ENCODE measurements at regions of chr11 and their contacts with region 1.

Region 1: GRCh38 chr11:765025-765801 is 12.1 kb downstream of the GATD1 start:
- DNase-seq: peak; percentile 55
- ATAC-seq: peak; percentile 91
- H3K4me3 Mint-ChIP-seq: no peak overlapping the region
- H3K27ac Mint-ChIP-seq: no peak overlapping the region
- H3K4me1 Mint-ChIP-seq: peaks cover 3% of the 10 kb centered on the region
- H3K27me3 Mint-ChIP-seq: no peaks in the 10 kb centered on the region
- CTCF ChIP-seq: no peak

Region 2: DNA sequence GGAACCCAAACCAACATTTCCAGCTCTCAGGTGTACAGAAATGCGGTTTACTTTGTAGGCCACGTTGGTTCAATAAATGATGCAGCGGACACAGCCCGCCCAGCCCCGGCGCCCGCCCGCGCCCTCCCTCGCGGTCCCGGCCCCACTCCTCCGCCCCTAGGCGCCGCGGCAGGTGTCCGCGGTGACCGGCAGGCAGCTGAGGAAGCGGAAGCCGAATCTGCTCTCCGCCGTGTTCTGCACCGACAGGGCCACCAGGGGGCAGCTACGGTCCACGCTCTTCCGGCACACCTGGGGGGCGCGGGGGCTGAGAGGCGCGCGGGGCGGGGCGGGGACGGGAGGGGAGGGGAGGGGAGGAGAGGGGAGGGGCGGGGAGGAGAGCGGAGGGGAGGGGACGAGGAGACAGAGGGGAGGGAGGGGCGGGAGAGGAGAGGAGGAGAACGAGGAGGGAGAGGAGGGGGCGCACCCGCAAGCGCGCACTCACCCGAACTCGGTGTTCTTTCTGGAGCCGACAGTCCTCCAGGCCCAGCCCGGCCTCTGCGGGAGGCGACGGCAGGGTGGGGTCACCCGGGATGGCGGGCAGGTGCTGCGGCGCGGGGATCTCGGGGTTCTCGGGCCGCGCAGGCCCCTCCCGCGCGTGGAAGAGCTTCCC is 210.3 kb before region 1 on chr11:
- CTCF ChIA-PET with region 1: no interaction called
- POLR2A ChIA-PET with region 1: no interaction called
- intact Hi-C with region 1: loop called (anchors 1 kb)
- DNase-seq: peak; percentile 70
- ATAC-seq: peak; percentile 93
- H3K4me3 Mint-ChIP-seq: peak overlapping the region; percentile 24
- H3K27ac Mint-ChIP-seq: no peak overlapping the region
- H3K4me1 Mint-ChIP-seq: peaks cover 6% of the 10 kb centered on the region
- H3K27me3 Mint-ChIP-seq: no peaks in the 10 kb centered on the region
- CTCF ChIP-seq: no peak

Region 3: DNA sequence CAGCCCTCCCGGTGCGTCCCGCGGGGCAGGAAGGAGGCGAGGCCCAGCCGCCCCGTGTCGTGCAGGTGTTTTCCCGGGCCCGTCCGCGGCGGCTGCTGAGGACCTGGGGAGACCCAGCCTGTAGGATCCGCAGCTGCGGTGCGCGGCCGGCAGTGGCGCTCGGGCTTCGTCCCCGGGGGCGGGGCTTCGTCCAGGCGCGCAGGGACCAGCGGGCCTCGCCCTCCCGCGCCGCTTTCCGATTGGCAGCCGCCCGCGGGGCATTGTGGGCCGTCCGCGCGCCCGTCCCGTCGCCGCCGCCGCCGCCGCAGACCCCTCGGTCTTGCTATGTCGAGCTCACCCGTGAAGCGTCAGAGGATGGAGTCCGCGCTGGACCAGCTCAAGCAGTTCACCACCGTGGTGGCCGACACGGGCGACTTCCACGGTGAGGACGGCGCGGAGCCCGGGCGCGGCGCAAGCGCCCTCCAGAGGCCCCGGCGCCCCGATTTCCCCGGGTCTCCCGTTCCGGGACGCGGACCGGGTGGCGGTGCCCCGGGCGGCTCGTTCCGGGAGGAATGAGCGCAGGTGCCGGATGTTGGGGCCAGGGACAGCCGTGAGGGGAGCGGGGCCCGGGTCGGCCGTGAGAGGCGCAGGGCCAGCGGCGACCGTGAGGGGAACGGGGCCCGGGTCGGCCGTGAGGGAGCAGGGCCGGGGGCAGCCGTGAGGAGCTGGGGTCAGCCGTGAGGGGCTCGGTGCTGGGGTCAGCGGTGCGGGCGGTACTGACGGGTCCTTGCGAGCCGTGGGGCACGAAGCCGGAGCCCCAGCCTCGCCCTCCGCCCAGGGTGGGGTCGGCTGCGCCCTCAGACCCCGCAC is 17.8 kb before region 1 on chr11 and contains the start of gene TALDO1:
- CTCF ChIA-PET with region 1: interaction called, 3 read pairs
- POLR2A ChIA-PET with region 1: interaction called, 8 read pairs
- intact Hi-C with region 1: loop called (anchors 1 kb)
- DNase-seq: peak; percentile 91
- ATAC-seq: peak; percentile 91
- H3K4me3 Mint-ChIP-seq: peak within 1 kb of the TSS; percentile 86
- H3K27ac Mint-ChIP-seq: peak within 1 kb of the TSS; percentile 82
- H3K4me1 Mint-ChIP-seq: peaks cover 24% of the 10 kb centered on the region
- H3K27me3 Mint-ChIP-seq: no peaks in the 10 kb centered on the region
- CTCF ChIP-seq: no peak
- total RNA-seq, gene TALDO1: 194 and 244 TPM in 2 replicates

Region 4: GRCh38 chr11:783581-784015 is 18.4 kb after region 1 on chr11:
- CTCF ChIA-PET with region 1: no interaction called
- POLR2A ChIA-PET with region 1: no interaction called
- intact Hi-C with region 1: no loop called
- DNase-seq: no peak
- ATAC-seq: peak; percentile 76
- H3K4me3 Mint-ChIP-seq: no peak overlapping the region
- H3K27ac Mint-ChIP-seq: no peak overlapping the region
- H3K4me1 Mint-ChIP-seq: peaks cover 2% of the 10 kb centered on the region
- H3K27me3 Mint-ChIP-seq: no peaks in the 10 kb centered on the region
- CTCF ChIP-seq: no peak